IMR-90 (cell line): ENCODE measurements at regions of chr14 and their contacts with region 1.

Region 1: GRCh38 chr14:65318636-65319506 is 93.7 kb upstream of the FUT8 start:
- DNase-seq: no peak
- ATAC-seq: no peak
- H3K4me3 ChIP-seq: no peak overlapping the region
- H3K27ac ChIP-seq: no peak overlapping the region
- H3K4me1 ChIP-seq: no peaks in the 10 kb centered on the region
- H3K27me3 ChIP-seq: no peaks in the 10 kb centered on the region
- CTCF ChIP-seq: no peak
- POLR2A ChIP-seq: no peak
- RAD21 ChIP-seq: no peak

Region 2: DNA sequence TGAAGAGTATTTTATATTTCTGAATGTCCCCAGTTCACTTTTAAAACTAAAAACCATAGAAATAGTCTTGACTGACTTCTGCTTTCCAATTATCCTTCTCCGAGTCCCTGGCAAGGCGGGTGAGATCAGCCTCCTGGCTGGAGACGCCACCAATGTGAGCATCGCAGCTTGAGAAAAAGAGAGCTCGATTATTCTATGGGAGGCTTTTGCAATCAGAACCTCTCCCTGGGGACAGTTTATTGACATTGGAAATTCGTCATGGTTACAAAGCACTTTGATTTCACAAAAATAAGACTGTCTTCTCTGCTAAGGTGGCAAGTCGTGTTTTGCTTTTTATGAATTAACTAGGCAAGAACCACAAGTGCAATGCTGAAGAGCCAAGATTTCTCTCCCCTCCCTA is 1976.5 kb before region 1 on chr14:
- CTCF ChIA-PET with region 1: no interaction called
- POLR2A ChIA-PET with region 1: no interaction called
- dilution Hi-C with region 1: no loop called
- in situ Hi-C with region 1: no loop called
- intact Hi-C with region 1: loop called (anchors 10 kb)
- DNase-seq: peak; percentile 2
- ATAC-seq: no peak
- H3K4me3 ChIP-seq: no peak overlapping the region
- H3K27ac ChIP-seq: no peak overlapping the region
- H3K4me1 ChIP-seq: no peaks in the 10 kb centered on the region
- H3K27me3 ChIP-seq: peaks cover 6% of the 10 kb centered on the region
- CTCF ChIP-seq: no peak
- POLR2A ChIP-seq: no peak
- RAD21 ChIP-seq: no peak

Region 3: GRCh38 chr14:65260786-65261185 is 58.1 kb before region 1 on chr14:
- CTCF ChIA-PET with region 1: no interaction called
- POLR2A ChIA-PET with region 1: no interaction called
- dilution Hi-C with region 1: no loop called
- in situ Hi-C with region 1: no loop called
- intact Hi-C with region 1: no loop called
- DNase-seq: peak; percentile 88
- ATAC-seq: peak; percentile 76
- H3K4me3 ChIP-seq: no peak overlapping the region
- H3K27ac ChIP-seq: no peak overlapping the region; the same call in 1 of the 2 replicates
- H3K4me1 ChIP-seq: peaks cover 19% of the 10 kb centered on the region
- H3K27me3 ChIP-seq: no peaks in the 10 kb centered on the region
- CTCF ChIP-seq: no peak
- POLR2A ChIP-seq: no peak
- RAD21 ChIP-seq: no peak

Region 4: DNA sequence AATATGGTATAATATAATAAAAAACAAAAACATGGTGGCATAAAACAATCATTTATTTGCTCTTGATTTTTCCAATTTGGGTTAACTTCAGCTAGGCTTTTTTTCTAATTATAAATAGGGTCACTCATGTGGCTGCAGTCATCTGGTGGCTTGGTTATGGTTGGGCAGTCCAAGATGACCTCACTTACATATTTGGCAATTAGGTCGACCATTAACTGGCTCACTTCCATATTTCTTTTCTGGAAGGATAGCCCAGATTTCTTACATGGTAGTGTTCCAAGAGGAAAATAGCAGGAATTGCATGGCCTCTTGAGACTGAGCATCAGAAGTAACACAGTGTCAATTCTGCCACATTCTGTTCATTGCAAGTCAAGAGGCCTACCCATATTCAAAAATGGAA is 247.1 kb after region 1 on chr14:
- CTCF ChIA-PET with region 1: no interaction called
- POLR2A ChIA-PET with region 1: no interaction called
- dilution Hi-C with region 1: no loop called
- in situ Hi-C with region 1: no loop called
- intact Hi-C with region 1: no loop called
- DNase-seq: no peak
- ATAC-seq: no peak
- H3K4me3 ChIP-seq: no peak overlapping the region
- H3K27ac ChIP-seq: no peak overlapping the region
- H3K4me1 ChIP-seq: no peaks in the 10 kb centered on the region
- H3K27me3 ChIP-seq: no peaks in the 10 kb centered on the region
- CTCF ChIP-seq: no peak
- POLR2A ChIP-seq: no peak
- RAD21 ChIP-seq: no peak